ENCODE measurements at regions of chrX and their contacts with region 1.

Region 1: GRCh38 chrX:19377799-19378198 is 34.1 kb downstream of the PDHA1 start:
- DNase-seq: peak; percentile 55

Region 2: GRCh38 chrX:19611636-19612376 is 234.0 kb after region 1 on chrX:
- intact Hi-C with region 1: no loop called
- DNase-seq: no peak

Region 3: DNA sequence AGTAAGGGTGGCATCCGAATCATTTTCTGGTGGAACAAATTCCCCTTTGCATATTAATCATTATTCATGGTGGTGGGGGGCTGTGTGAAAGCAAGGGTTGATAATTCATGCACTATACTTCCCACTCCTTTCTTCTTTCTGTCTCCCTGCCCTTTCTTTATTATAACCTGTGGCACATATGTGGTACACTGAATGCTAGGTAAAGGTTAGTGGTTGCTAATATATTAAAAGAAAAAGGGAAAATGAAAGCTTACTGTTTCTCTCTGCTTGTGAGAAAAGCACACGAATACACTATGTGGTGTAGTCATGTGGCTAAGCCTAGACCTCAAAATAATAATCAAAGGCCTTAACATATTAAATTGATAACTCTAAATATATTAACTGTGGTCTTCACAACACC is 1067.3 kb after region 1 on chrX:
- intact Hi-C with region 1: loop called in 1 of 2 experiments (anchors 5 kb)
- DNase-seq: no peak

Measured in posterior vena cava (tissue), 2 donors.